Caco-2 (cell line): ENCODE measurements at regions of chrX and their contacts with region 1.

Region 1: GRCh38 chrX:1453951-1454785 is 1.5 kb upstream of the ASMTL start:
- DNase-seq: peak; percentile 77 to 86
- H3K4me3 ChIP-seq: peak overlapping the region; percentile 25
- H3K4me3 Mint-ChIP-seq: no peak overlapping the region
- H3K27ac Mint-ChIP-seq: no peak overlapping the region
- H3K4me1 ChIP-seq: no peaks in the 10 kb centered on the region
- H3K4me1 Mint-ChIP-seq: no peaks in the 10 kb centered on the region
- H3K27me3 ChIP-seq: no peaks in the 10 kb centered on the region
- H3K27me3 Mint-ChIP-seq: peaks cover 2% of the 10 kb centered on the region
- CTCF ChIP-seq: peak; percentile 90 to 96

Region 2: DNA sequence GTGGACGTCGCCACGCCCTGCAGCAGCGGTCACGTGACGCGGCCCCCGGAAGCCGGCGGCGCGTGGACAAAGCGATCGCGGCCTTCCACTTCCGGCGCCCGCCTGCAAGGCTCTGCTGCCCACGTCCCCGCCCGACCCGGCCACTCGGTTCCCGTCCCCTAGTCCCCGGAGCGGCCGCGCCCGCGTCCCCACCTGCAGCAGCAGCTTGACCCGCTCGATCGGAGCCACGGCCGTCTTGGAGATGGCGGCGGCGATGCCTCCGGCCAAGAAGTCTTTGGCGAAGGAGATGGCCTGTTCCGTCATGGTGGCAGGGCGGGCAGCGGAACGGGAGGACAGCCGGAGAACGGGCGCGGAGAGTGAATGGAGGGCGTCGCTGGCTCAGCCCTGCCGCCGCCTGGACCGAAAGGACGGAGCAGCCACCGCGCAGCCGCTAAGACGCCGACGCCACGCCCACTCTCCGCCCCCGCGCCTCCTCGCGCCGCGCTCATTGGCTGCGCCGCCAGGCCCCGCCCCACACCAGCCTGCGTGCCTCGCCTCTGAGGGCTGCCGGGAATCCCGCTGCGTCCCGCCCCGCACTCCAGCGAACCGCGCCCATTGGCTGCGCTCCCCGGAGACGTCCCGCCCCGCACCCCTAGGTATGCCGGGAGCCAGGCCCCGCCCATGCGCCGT is 62.3 kb before region 1 on chrX and contains the start of gene SLC25A6:
- CTCF ChIA-PET with region 1: no interaction called
- POLR2A ChIA-PET with region 1: no interaction called
- intact Hi-C with region 1: loop called (anchors 2 kb)
- DNase-seq: peak; percentile 98 to 99
- H3K4me3 ChIP-seq: peak within 1 kb of the TSS; percentile 100
- H3K4me3 Mint-ChIP-seq: peak within 1 kb of the TSS; percentile 93
- H3K27ac Mint-ChIP-seq: peak within 1 kb of the TSS; percentile 99
- H3K4me1 ChIP-seq: 0 out of 2 replicates have a peak, but pooled peaks cover 5% of the 10 kb centered on the region
- H3K4me1 Mint-ChIP-seq: peaks cover 25% of the 10 kb centered on the region
- H3K27me3 ChIP-seq: no peaks in the 10 kb centered on the region
- H3K27me3 Mint-ChIP-seq: no peaks in the 10 kb centered on the region
- CTCF ChIP-seq: no peak
- total RNA-seq, gene SLC25A6: 450 and 455 TPM in 2 replicates

Region 3: DNA sequence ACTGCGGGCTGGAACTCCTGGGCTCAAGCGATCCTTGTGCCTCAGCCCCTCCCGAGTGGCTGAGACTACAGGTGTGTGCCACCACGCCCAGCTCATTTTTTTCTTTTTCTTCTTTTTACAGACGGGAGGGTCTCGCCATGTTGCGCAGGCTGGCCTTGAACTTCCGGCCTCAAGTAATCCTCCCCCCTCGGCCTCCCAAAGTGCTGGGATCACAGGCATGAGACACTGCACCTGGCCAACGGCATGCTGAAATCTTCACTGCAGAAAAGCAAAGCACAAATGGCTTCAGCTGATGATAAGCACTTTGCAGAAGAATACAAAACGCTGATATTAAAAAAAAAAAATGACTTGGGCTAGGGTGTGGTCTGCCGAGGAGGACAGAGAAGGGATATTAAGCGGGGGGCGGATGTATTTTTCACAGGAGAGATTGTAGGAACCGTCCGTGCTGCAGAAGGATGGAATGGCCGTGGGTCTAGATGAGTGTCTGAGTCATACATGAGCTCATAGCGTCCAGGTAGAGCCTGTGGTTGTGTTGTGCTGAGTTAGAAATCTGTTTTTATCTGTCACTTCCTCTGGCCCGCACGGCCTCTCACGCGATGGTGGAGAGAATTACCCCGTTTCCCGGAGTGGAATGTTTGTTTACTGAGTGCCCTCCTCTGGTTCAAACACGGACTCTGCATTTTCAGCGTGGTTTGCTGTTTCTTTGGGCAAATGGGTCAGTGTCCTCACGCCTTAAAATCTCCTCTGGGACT is 128.7 kb after region 1 on chrX:
- CTCF ChIA-PET with region 1: no interaction called
- POLR2A ChIA-PET with region 1: no interaction called
- intact Hi-C with region 1: loop called (anchors 1 kb)
- DNase-seq: no peak
- H3K4me3 ChIP-seq: no peak overlapping the region
- H3K4me3 Mint-ChIP-seq: peak overlapping the region; percentile 72
- H3K27ac Mint-ChIP-seq: no peak overlapping the region
- H3K4me1 ChIP-seq: no peaks in the 10 kb centered on the region
- H3K4me1 Mint-ChIP-seq: no peaks in the 10 kb centered on the region
- H3K27me3 ChIP-seq: no peaks in the 10 kb centered on the region
- H3K27me3 Mint-ChIP-seq: no peaks in the 10 kb centered on the region
- CTCF ChIP-seq: no peak

Region 4: GRCh38 chrX:2627272-2627867 is 1173.2 kb after region 1 on chrX:
- CTCF ChIA-PET with region 1: no interaction called
- POLR2A ChIA-PET with region 1: no interaction called
- intact Hi-C with region 1: loop called (anchors 10 kb)
- DNase-seq: peak; percentile 50 to 74
- H3K4me3 ChIP-seq: no peak overlapping the region
- H3K4me3 Mint-ChIP-seq: no peak overlapping the region
- H3K27ac Mint-ChIP-seq: no peak overlapping the region
- H3K4me1 ChIP-seq: no peaks in the 10 kb centered on the region
- H3K4me1 Mint-ChIP-seq: peaks cover 8% of the 10 kb centered on the region
- H3K27me3 ChIP-seq: no peaks in the 10 kb centered on the region
- H3K27me3 Mint-ChIP-seq: no peaks in the 10 kb centered on the region
- CTCF ChIP-seq: peak; percentile 68 to 71